Activated CD4-positive, alpha-beta T cell treated with anti-CD3 and anti-CD28 coated beads, Interleukin-2, amount 10 ng/mL, durations not matched to agents 24 days and 14 days (primary cell): ENCODE measurements at regions of chr2 and their contacts with region 1.

Region 1: GRCh38 chr2:112726497-112727190 is 5.8 kb downstream of the NT5DC4 start:
- DNase-seq: peak; percentile 97
- H3K4me3 Mint-ChIP-seq: no peak overlapping the region
- H3K27ac Mint-ChIP-seq: peak overlapping the region; percentile 32
- H3K4me1 Mint-ChIP-seq: peaks cover 25% of the 10 kb centered on the region
- H3K27me3 Mint-ChIP-seq: peaks cover 2% of the 10 kb centered on the region

Region 2: GRCh38 chr2:112601751-112602150 is 124.9 kb before region 1 on chr2:
- intact Hi-C with region 1: loop called (anchors 1 kb)
- DNase-seq: no peak
- H3K4me3 Mint-ChIP-seq: no peak overlapping the region
- H3K27ac Mint-ChIP-seq: no peak overlapping the region
- H3K4me1 Mint-ChIP-seq: peaks cover 5% of the 10 kb centered on the region
- H3K27me3 Mint-ChIP-seq: no peaks in the 10 kb centered on the region

Region 3: GRCh38 chr2:112685271-112685884 is 41.3 kb before region 1 on chr2:
- intact Hi-C with region 1: no loop called
- DNase-seq: no peak
- H3K4me3 Mint-ChIP-seq: no peak overlapping the region
- H3K27ac Mint-ChIP-seq: no peak overlapping the region
- H3K4me1 Mint-ChIP-seq: peaks cover 19% of the 10 kb centered on the region
- H3K27me3 Mint-ChIP-seq: no peaks in the 10 kb centered on the region

Region 4: DNA sequence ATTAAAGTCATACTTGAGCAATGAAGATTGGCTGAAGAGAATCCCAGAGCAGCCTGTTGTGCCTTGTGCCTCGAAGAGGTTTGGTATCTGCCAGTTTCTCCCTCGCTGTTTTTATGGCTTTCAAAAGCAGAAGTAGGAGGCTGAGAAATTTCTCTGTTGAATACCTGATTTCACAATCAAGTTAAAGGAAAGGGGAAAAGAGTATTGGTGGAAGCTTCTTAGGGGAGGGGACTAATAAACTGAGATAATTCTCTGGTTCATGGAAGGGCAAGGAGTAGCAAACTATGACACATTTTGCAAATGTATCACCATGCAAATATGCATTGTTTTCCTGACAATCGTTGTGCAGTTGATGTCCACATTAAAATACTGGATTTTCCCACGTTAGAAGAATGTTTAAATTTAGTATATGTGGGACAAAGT is 110.1 kb after region 1 on chr2 and contains the start of gene IL1B:
- intact Hi-C with region 1: no loop called
- DNase-seq: no peak
- H3K4me3 Mint-ChIP-seq: no peak within 1 kb of the TSS
- H3K27ac Mint-ChIP-seq: no peak within 1 kb of the TSS
- H3K4me1 Mint-ChIP-seq: peaks cover 4% of the 10 kb centered on the region
- H3K27me3 Mint-ChIP-seq: peaks cover 41% of the 10 kb centered on the region
- total RNA-seq, gene IL1B: 0.33 and 0.92 TPM in 2 replicates